Endothelial cell of umbilical vein (primary cell): ENCODE measurements at regions of chr1 and their contacts with region 1.

Region 1: GRCh38 chr1:8182034-8182761 is 135.7 kb upstream of the SLC45A1 start:
- DNase-seq: peak; percentile 92
- H3K4me3 ChIP-seq: peak overlapping the region in 1 of 3 experiments; percentile 39
- H3K27ac ChIP-seq: peak overlapping the region; percentile 88
- H3K4me1 ChIP-seq: peaks cover 21% of the 10 kb centered on the region
- H3K27me3 ChIP-seq: no peaks in the 10 kb centered on the region
- CTCF ChIP-seq: no peak
- POLR2A ChIP-seq: peak; percentile 38

Region 2: GRCh38 chr1:8026153-8026975 is 155.8 kb before region 1 on chr1 and contains the start of gene ERRFI1:
- CTCF ChIA-PET with region 1: interaction called, 3 read pairs
- POLR2A ChIA-PET with region 1: no interaction called
- dilution Hi-C with region 1: no loop called
- intact Hi-C with region 1: loop called (anchors 2 kb)
- DNase-seq: peak; percentile 94
- H3K4me3 ChIP-seq: peak within 1 kb of the TSS; percentile 81 to 98 (median 94)
- H3K27ac ChIP-seq: peak within 1 kb of the TSS; percentile 63
- H3K4me1 ChIP-seq: peaks cover 57% of the 10 kb centered on the region
- H3K27me3 ChIP-seq: no peaks in the 10 kb centered on the region
- CTCF ChIP-seq: no peak
- POLR2A ChIP-seq: peak; percentile 99
- total RNA-seq, gene ERRFI1: 28.1 and 31.2 TPM in 2 replicates

Region 3: DNA sequence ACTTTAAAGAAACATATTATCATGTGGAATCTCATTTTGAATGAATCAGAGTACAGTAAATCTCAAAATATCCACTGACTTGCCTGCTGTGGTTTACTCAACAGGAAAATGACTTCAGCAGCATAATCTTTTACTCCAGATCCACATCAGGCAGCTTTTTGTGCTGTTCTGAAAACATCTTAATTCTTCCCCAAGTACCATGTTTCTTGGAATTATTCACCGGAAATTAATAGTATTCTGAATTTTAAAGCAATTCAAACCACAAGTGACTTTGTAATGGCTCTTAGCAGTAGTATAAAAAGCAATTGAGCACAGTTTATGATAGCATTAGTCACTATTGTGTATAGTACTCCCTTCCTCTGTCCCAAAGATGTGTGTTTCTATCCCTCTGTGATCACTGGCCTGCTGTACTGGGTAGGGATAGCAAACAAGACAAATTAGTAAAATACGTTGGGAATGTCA is 91.9 kb before region 1 on chr1:
- CTCF ChIA-PET with region 1: interaction called, 3 read pairs
- POLR2A ChIA-PET with region 1: no interaction called
- dilution Hi-C with region 1: no loop called
- intact Hi-C with region 1: loop called (anchors 1 kb)
- DNase-seq: peak; percentile 95
- H3K4me3 ChIP-seq: no peak overlapping the region
- H3K27ac ChIP-seq: peak overlapping the region; percentile 90
- H3K4me1 ChIP-seq: peaks cover 42% of the 10 kb centered on the region
- H3K27me3 ChIP-seq: no peaks in the 10 kb centered on the region
- CTCF ChIP-seq: no peak
- POLR2A ChIP-seq: peak; percentile 19

Region 4: GRCh38 chr1:8121261-8122170 is 60.7 kb before region 1 on chr1:
- CTCF ChIA-PET with region 1: interaction called, 3 read pairs
- POLR2A ChIA-PET with region 1: no interaction called
- dilution Hi-C with region 1: no loop called
- intact Hi-C with region 1: loop called (anchors 1 kb)
- DNase-seq: peak; percentile 99
- H3K4me3 ChIP-seq: peak overlapping the region in 1 of 3 experiments; percentile 6
- H3K27ac ChIP-seq: peak overlapping the region; percentile 96
- H3K4me1 ChIP-seq: peaks cover 50% of the 10 kb centered on the region
- H3K27me3 ChIP-seq: no peaks in the 10 kb centered on the region
- CTCF ChIP-seq: no peak
- POLR2A ChIP-seq: peak; percentile 44

Region 5: GRCh38 chr1:8197493-8198282 is 15.5 kb after region 1 on chr1:
- CTCF ChIA-PET with region 1: interaction called, 3 read pairs
- POLR2A ChIA-PET with region 1: interaction called, 4 read pairs
- dilution Hi-C with region 1: no loop called
- intact Hi-C with region 1: loop called (anchors 1 kb)
- DNase-seq: peak; percentile 94
- H3K4me3 ChIP-seq: no peak overlapping the region
- H3K27ac ChIP-seq: peak overlapping the region; percentile 18
- H3K4me1 ChIP-seq: peaks cover 24% of the 10 kb centered on the region
- H3K27me3 ChIP-seq: no peaks in the 10 kb centered on the region
- CTCF ChIP-seq: no peak
- POLR2A ChIP-seq: peak; percentile 50

Region 6: DNA sequence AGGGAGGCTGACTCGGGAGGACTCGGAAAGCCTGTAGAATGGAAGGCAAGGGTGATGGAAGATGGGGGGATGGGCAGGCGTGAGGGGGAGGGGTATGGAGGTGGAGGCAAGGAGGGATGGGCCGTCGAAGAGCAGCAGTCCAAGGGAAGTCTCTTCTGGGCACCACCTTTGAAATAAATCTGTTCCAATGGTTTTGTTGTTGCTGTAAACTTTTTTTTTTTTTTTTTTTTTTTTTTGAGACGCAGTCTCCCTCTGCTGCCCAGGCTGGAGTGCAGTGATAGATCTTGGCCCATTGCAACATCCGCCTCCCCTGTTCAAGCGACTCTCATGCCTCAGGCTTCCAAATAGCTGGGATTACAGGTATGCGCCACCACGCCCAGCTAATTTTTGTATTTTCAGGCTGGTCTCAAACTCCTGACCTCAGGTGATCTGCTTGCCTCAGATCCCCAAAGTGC is 56.7 kb after region 1 on chr1:
- CTCF ChIA-PET with region 1: no interaction called
- POLR2A ChIA-PET with region 1: no interaction called
- dilution Hi-C with region 1: no loop called
- intact Hi-C with region 1: loop called (anchors 1 kb)
- DNase-seq: peak; percentile 33
- H3K4me3 ChIP-seq: no peak overlapping the region
- H3K27ac ChIP-seq: peak overlapping the region; percentile 36
- H3K4me1 ChIP-seq: peaks cover 25% of the 10 kb centered on the region
- H3K27me3 ChIP-seq: no peaks in the 10 kb centered on the region
- CTCF ChIP-seq: peak; percentile 6 to 21
- POLR2A ChIP-seq: no peak